CD4-positive, alpha-beta T cell (primary cell): ENCODE measurements at regions of chr17 and their contacts with region 1.

Region 1: GRCh38 chr17:44210342-44211192 is 8.9 kb downstream of the UBTF start:
- DNase-seq: peak; percentile 83 to 96 (median 90)
- ATAC-seq: peak; percentile 97
- H3K4me3 ChIP-seq: no peak overlapping the region
- H3K4me3 Mint-ChIP-seq: peak overlapping the region; percentile 65
- H3K27ac ChIP-seq: peak overlapping the region; percentile 32 to 53
- H3K27ac Mint-ChIP-seq: peak overlapping the region; percentile 59
- H3K4me1 ChIP-seq: peaks cover 73% of the 10 kb centered on the region
- H3K4me1 Mint-ChIP-seq: peaks cover 41% of the 10 kb centered on the region
- H3K27me3 ChIP-seq: no peaks in the 10 kb centered on the region
- H3K27me3 Mint-ChIP-seq: no peaks in the 10 kb centered on the region
- CTCF ChIP-seq: peak; percentile 98

Region 2: GRCh38 chr17:44199553-44200477 is 10.8 kb before region 1 on chr17 and contains the start of gene ATXN7L3:
- CTCF ChIA-PET with region 1: interaction called, 20 read pairs
- POLR2A ChIA-PET with region 1: interaction called, 181 read pairs
- intact Hi-C with region 1: no loop called
- DNase-seq: peak; percentile 99 to 100 (median 99)
- ATAC-seq: peak; percentile 80
- H3K4me3 ChIP-seq: peak within 1 kb of the TSS; percentile 94
- H3K4me3 Mint-ChIP-seq: peak within 1 kb of the TSS; percentile 93
- H3K27ac ChIP-seq: peak within 1 kb of the TSS; percentile 83 to 87
- H3K27ac Mint-ChIP-seq: peak within 1 kb of the TSS; percentile 93
- H3K4me1 ChIP-seq: peaks cover 45% of the 10 kb centered on the region
- H3K4me1 Mint-ChIP-seq: peaks cover 46% of the 10 kb centered on the region
- H3K27me3 ChIP-seq: no peaks in the 10 kb centered on the region
- H3K27me3 Mint-ChIP-seq: no peaks in the 10 kb centered on the region
- CTCF ChIP-seq: no peak
- total RNA-seq, gene ATXN7L3: 85.2 to 99.2 TPM

Region 3: GRCh38 chr17:44324571-44325275 is 114.2 kb after region 1 on chr17 and contains the start of gene SLC25A39:
- CTCF ChIA-PET with region 1: interaction called, 33 read pairs
- POLR2A ChIA-PET with region 1: interaction called, 68 read pairs
- intact Hi-C with region 1: no loop called
- DNase-seq: peak; percentile 87 to 97 (median 94)
- ATAC-seq: peak; percentile 69
- H3K4me3 ChIP-seq: peak within 1 kb of the TSS; percentile 85
- H3K4me3 Mint-ChIP-seq: peak within 1 kb of the TSS; percentile 95
- H3K27ac ChIP-seq: peak within 1 kb of the TSS; percentile 83 to 90
- H3K27ac Mint-ChIP-seq: peak within 1 kb of the TSS; percentile 96
- H3K4me1 ChIP-seq: peaks cover 44% of the 10 kb centered on the region
- H3K4me1 Mint-ChIP-seq: peaks cover 27% of the 10 kb centered on the region
- H3K27me3 ChIP-seq: no peaks in the 10 kb centered on the region
- H3K27me3 Mint-ChIP-seq: no peaks in the 10 kb centered on the region
- CTCF ChIP-seq: no peak
- total RNA-seq, gene SLC25A39: 55.5 to 65.5 TPM

Region 4: DNA sequence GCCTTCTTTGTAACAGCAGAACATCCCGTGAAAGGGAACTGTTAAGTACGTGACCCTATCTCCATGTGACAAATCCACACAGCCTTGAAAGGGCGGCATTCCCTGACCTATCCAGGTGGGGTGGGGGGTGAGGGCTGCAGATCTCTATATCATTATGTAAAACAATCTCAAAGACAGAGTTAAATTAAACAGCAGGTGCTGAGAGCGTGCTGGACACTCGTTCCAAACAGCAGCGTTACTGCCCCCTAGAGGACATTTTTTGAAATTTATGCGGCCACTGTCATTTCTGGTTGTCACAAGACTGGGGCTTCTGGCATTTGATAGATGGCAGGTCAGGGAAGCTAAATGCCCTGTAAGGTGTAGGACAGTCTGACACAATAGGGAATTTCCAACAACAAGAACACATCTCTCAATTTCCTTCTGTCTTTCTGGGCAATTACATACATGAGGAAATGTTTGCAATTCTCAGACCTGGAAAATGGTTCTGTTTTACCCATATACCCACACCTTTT is 120.7 kb after region 1 on chr17:
- CTCF ChIA-PET with region 1: interaction called, 33 read pairs
- POLR2A ChIA-PET with region 1: interaction called, 68 read pairs
- intact Hi-C with region 1: loop called (anchors 1 kb)
- DNase-seq: peak; percentile 48 to 87 (median 59)
- ATAC-seq: peak; percentile 17
- H3K4me3 ChIP-seq: no peak overlapping the region
- H3K4me3 Mint-ChIP-seq: no peak overlapping the region
- H3K27ac ChIP-seq: no peak overlapping the region
- H3K27ac Mint-ChIP-seq: peak overlapping the region; percentile 43
- H3K4me1 ChIP-seq: peaks cover 14% of the 10 kb centered on the region
- H3K4me1 Mint-ChIP-seq: peaks cover 17% of the 10 kb centered on the region
- H3K27me3 ChIP-seq: no peaks in the 10 kb centered on the region
- H3K27me3 Mint-ChIP-seq: no peaks in the 10 kb centered on the region
- CTCF ChIP-seq: peak; percentile 78

Region 5: DNA sequence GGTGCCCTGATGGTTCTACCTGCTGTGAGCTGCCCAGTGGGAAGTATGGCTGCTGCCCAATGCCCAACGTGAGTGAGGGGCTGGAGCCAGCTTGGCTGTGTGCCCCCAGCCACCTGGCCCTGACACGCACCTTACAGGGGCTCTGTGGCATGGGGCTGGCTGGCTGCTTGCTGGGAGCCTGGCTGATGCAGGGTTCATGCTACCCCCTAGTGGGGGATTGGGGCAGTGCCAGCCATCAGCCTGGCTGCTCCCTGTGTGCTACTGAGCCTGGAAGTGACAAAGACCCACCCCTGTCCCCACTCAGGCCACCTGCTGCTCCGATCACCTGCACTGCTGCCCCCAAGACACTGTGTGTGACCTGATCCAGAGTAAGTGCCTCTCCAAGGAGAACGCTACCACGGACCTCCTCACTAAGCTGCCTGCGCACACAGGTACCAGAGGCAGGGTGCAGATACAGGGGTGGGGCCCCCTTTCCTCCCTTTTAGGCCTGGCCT is 140.2 kb after region 1 on chr17:
- CTCF ChIA-PET with region 1: interaction called, 18 read pairs
- POLR2A ChIA-PET with region 1: interaction called, 6 read pairs
- intact Hi-C with region 1: loop called in 1 of 2 experiments (anchors 1 kb)
- DNase-seq: peak; percentile 53 to 84 (median 68)
- ATAC-seq: peak; percentile 79
- H3K4me3 ChIP-seq: no peak overlapping the region
- H3K4me3 Mint-ChIP-seq: peak overlapping the region; percentile 52
- H3K27ac ChIP-seq: no peak overlapping the region
- H3K27ac Mint-ChIP-seq: no peak overlapping the region
- H3K4me1 ChIP-seq: peaks cover 26% of the 10 kb centered on the region
- H3K4me1 Mint-ChIP-seq: peaks cover 17% of the 10 kb centered on the region
- H3K27me3 ChIP-seq: no peaks in the 10 kb centered on the region
- H3K27me3 Mint-ChIP-seq: peaks cover 4% of the 10 kb centered on the region
- CTCF ChIP-seq: peak; percentile 83